ENCODE measurements at regions of chr19 and their contacts with region 1.

Region 1: GRCh38 chr19:51338563-51339312 is 3.2 kb downstream of the VSIG10L start:
- DNase-seq: peak; percentile 87 to 92
- H3K4me3 ChIP-seq: peak overlapping the region; percentile 53 to 66
- H3K27ac ChIP-seq: peak overlapping the region; percentile 83 to 89
- H3K4me1 ChIP-seq: peaks cover 0 to 18% (median 11%) of the 10 kb centered on the region in 4 donors
- H3K27me3 ChIP-seq: no peaks in the 10 kb centered on the region
- CTCF ChIP-seq: peak; percentile 76 to 89

Region 2: DNA sequence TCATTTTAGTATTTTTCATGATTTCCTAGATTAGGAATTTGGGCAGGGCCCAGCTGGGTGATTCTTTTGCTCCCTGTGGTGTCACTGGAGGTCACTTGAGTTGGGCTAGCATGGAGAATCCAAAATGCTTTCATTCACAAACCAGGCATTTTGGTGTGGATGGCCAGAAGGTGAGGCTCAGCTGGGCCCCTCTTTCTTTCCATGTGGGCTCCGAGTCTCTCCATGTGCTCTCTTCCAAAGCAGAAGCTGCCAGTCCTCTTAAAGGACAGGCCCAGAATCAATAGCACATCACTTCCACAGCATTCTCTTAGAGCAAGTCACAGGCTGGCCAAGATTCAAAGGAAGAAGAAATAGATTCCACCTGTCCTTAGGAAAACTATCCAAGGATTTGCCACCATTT is 49.1 kb before region 1 on chr19:
- intact Hi-C with region 1: no loop called
- DNase-seq: no peak
- H3K4me3 ChIP-seq: no peak overlapping the region
- H3K27ac ChIP-seq: no peak overlapping the region
- H3K4me1 ChIP-seq: no peaks in the 10 kb centered on the region
- H3K27me3 ChIP-seq: peaks cover 0 to 16% of the 10 kb centered on the region in 2 donors
- CTCF ChIP-seq: no peak

Region 3: DNA sequence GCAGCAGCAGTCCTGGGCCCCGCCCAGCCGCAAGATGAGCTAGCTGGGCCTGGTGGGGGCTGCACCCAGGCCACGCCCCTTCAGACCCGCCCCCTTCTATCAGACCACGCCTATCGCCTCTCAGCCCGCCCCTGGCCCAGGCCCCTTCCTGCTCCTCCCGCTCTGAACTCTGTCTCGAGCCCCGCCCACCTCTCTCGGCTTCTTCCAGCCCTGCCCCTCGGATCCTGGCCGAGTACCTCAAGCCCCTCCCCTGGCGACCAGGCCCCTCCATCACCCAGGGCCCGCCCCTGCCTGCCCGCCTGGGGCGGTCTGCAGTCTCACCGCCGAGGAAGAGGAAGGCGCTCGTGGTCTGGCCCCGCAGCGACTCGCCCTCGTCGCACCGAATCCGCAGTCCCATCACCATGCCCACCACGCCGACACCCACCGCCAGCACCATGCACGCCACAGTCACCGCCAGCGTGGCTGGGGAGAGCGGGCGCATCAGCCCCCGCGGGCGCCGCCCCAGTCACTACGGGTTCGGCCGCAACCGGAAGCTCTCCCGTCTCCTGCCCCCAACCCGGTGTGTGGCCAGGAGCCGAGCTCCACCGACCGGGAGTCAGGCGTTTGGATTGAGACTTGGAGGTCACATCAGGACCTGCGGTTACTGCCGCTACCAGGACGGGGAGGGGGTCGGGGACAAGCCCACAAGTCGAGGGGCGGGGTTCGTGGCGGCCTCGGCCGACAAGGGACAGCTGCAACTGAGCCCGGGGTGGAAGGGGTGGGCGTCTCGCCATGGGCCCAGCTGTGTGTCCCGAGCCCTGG is 29.0 kb after region 1 on chr19:
- intact Hi-C with region 1: loop called (anchors 1 kb)
- DNase-seq: peak; percentile 99 to 100
- H3K4me3 ChIP-seq: peak overlapping the region; percentile 71 to 97
- H3K27ac ChIP-seq: peak overlapping the region; percentile 97
- H3K4me1 ChIP-seq: peaks cover 0 to 29% (median 22%) of the 10 kb centered on the region in 4 donors
- H3K27me3 ChIP-seq: peaks cover 0 to 2% of the 10 kb centered on the region in 2 donors
- CTCF ChIP-seq: no peak

Region 4: GRCh38 chr19:51439021-51439465 is 100.3 kb after region 1 on chr19:
- intact Hi-C with region 1: loop called (anchors 5 kb)
- DNase-seq: no peak
- H3K4me3 ChIP-seq: no peak overlapping the region
- H3K27ac ChIP-seq: no peak overlapping the region
- H3K4me1 ChIP-seq: no peaks in the 10 kb centered on the region
- H3K27me3 ChIP-seq: peaks cover 0 to 33% of the 10 kb centered on the region in 2 donors
- CTCF ChIP-seq: peak in 1 of 2 experiments; percentile 8

Region 5: DNA sequence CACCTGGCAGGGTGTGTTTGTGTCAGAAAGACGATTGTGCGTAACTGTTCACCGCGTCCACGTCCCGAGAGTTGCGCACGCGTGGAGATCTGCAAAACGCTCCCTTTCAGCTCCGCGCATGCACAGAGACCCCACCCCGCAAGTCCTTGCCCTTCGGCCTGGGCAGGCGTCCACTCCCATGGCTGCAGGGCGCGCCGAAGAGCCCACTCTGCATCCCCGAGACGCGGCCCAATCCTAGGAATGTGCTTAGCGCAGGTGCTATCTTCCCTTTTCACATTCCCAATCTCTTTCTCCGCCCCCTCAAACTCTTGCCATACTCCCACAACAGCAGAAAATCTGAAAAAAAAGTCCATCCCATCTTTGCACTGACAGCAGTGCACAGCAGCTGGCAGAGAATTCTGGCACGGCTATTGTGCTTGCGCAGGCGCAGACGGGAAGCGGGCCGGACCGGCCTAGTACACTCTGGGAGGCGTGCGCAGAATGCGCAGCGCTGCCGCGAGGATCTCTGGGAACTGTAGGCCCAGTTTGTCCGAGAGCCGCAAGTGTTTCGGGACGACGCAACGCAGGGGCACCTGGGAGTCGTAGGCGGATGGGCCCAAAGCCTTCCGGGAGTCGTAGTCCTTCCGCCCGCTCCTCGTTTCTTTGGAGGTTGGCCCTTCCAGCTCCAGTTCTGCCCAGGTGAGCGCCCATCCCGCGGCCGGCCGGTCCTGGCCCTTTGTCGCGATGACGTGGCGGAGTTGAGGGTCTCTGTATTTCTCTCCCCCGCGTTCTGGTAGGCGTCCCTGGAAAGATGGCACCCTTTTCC is 255.4 kb after region 1 on chr19:
- intact Hi-C with region 1: loop called (anchors 10 kb)
- DNase-seq: peak; percentile 99
- H3K4me3 ChIP-seq: peak overlapping the region; percentile 59 to 63
- H3K27ac ChIP-seq: peak overlapping the region; percentile 34 to 66
- H3K4me1 ChIP-seq: peaks cover 3 to 18% (median 11%) of the 10 kb centered on the region in 4 donors
- H3K27me3 ChIP-seq: peaks cover 0 to 14% of the 10 kb centered on the region in 2 donors
- CTCF ChIP-seq: no peak

Measured in tibial artery (tissue), 4 donors.